ENCODE measurements at regions of chr21 and their contacts with region 1.

Region 1: GRCh38 chr21:42062236-42063022 is 8.7 kb upstream of the UMODL1 start:
- DNase-seq: peak; percentile 83 to 97 (median 90)
- ATAC-seq: peak; percentile 84
- H3K4me3 ChIP-seq: peak overlapping the region; percentile 79
- H3K4me3 Mint-ChIP-seq: peak overlapping the region; percentile 81
- H3K27ac ChIP-seq: peak overlapping the region; percentile 89 to 93
- H3K27ac Mint-ChIP-seq: peak overlapping the region; percentile 98
- H3K4me1 ChIP-seq: peaks cover 56% of the 10 kb centered on the region
- H3K4me1 Mint-ChIP-seq: peaks cover 63% of the 10 kb centered on the region
- H3K27me3 ChIP-seq: no peaks in the 10 kb centered on the region
- H3K27me3 Mint-ChIP-seq: no peaks in the 10 kb centered on the region
- CTCF ChIP-seq: no peak

Region 2: DNA sequence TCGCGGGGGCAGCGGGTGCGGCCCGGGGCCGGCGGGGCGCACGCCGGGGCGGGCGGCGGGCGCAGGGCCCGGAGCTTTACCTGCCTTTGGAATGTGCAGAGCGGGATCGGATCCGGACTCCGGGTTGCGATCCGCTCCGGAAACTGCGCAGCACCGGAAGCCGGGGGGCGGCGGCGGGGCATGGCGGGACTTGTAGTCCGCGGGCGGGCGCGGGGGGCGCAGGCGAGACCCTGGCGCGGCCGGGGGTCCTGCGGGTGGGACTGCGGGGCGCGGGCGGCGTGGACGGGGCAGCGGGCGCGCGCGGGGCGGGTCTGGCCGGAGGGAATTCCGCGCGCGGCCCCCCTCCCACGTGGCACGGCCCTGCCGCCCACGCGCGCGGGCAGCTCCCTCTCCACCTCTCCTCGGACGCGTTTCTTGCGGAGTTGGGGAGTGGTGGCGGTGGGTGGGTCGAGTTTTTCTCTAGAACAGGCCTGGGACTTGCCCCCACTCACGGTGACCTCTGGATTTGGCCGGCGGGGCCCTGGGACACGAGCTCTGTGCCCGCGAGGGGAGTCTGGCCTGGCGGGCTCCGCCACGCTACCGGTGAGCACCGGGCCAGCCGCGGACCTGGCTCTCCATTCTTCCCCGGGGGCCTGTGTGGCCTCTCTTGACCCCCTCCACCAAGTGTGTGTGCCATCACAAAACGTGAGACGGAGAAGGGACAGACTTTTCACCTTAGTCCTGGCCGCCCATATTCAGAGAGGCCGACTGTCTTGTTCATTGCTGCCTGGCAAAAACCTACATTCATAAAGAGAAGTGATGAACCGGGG is 183.0 kb before region 1 on chr21 and contains the start of gene PRDM15:
- CTCF ChIA-PET with region 1: no interaction called
- POLR2A ChIA-PET with region 1: interaction called, 14 read pairs
- intact Hi-C with region 1: loop called (anchors 2 kb)
- DNase-seq: peak; percentile 62 to 86 (median 76)
- ATAC-seq: peak; percentile 71
- H3K4me3 ChIP-seq: peak within 1 kb of the TSS; percentile 73
- H3K4me3 Mint-ChIP-seq: peak within 1 kb of the TSS; percentile 97
- H3K27ac ChIP-seq: peak within 1 kb of the TSS; percentile 47 to 70
- H3K27ac Mint-ChIP-seq: peak within 1 kb of the TSS; percentile 93
- H3K4me1 ChIP-seq: peaks cover 32% of the 10 kb centered on the region
- H3K4me1 Mint-ChIP-seq: peaks cover 37% of the 10 kb centered on the region
- H3K27me3 ChIP-seq: no peaks in the 10 kb centered on the region
- H3K27me3 Mint-ChIP-seq: no peaks in the 10 kb centered on the region
- CTCF ChIP-seq: no peak
- total RNA-seq, gene PRDM15: 10.4 to 12.0 TPM

Region 3: DNA sequence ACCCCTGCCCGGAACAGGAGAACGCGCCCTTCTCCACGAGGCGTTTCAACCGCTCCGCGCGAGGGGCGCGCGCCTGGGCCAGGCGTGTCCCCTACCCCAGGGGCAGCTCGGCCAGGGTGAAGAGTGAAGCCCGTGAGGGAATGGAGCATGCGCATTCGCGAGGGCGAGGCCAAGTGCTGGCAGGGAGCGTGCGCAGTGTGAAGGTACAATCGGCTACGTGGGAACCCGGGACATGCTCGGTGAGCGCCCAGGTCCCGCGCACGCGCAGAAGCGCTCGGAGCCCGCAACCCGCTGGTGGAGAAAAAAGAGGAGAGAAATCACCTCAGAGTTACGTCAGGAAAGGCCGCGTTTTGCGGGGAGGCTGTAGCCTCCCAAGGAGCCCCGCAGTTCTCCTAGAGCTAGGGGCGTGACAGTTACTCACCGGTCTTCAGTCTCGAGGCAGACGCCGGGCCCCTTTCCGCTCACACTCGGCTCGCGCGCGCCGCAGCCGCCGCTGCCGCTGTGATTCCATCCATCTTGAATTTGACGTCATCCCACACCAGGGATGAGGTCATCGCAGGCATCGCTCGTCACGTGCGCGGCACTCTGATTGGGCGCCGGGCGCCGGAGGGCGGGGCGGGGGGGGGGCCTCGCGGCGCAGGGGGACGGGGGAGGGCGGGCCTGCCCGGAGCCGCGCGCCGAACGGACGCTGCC is 52.5 kb before region 1 on chr21 and contains the start of gene ZBTB21:
- CTCF ChIA-PET with region 1: interaction called, 3 read pairs
- POLR2A ChIA-PET with region 1: interaction called, 88 read pairs
- intact Hi-C with region 1: loop called (anchors 1 kb)
- DNase-seq: peak; percentile 96 to 99 (median 98)
- ATAC-seq: peak; percentile 73
- H3K4me3 ChIP-seq: peak within 1 kb of the TSS; percentile 83
- H3K4me3 Mint-ChIP-seq: peak within 1 kb of the TSS; percentile 100
- H3K27ac ChIP-seq: peak within 1 kb of the TSS; percentile 91 to 100
- H3K27ac Mint-ChIP-seq: peak within 1 kb of the TSS; percentile 99
- H3K4me1 ChIP-seq: peaks cover 11% of the 10 kb centered on the region
- H3K4me1 Mint-ChIP-seq: peaks cover 34% of the 10 kb centered on the region
- H3K27me3 ChIP-seq: no peaks in the 10 kb centered on the region
- H3K27me3 Mint-ChIP-seq: no peaks in the 10 kb centered on the region
- CTCF ChIP-seq: no peak
- total RNA-seq, gene ZBTB21: 132 to 139 TPM

Region 4: DNA sequence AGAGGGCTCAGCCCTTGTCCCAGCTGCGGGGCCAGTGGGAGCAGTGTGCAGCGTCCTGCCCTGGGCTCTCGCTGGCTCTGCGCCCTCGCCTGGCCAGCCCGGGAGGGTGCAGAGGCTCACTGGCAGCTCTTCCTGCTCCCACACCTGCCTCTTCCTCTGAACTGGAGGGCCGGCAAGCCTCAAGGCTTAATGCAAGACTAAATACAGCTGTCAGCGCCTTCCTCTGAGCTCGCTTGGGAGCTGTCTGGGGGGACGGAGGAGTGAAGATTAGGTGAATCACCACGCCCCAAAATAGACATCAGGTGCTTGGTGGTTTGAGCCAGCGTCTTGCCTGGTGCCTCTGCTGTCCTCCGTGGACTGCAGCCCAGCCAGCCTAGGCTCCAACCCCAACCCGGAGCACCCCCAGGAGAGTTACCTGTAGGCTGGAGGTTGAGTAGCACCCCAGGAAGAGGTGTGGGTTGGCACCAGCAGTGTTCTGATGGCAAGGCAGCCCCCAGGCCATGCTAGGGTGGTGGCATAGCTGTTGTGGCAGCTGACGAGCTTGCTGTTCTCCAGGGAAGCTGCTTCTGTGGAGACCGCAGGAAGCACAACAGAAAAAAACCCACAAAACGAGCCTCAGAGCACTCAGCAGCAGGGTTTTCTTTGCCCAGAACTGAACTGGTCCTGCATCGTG is 45.6 kb after region 1 on chr21:
- CTCF ChIA-PET with region 1: interaction called, 8 read pairs
- POLR2A ChIA-PET with region 1: interaction called, 49 read pairs
- intact Hi-C with region 1: loop called (anchors 1 to 2 kb)
- DNase-seq: peak; percentile 42 to 85 (median 68)
- ATAC-seq: peak; percentile 95
- H3K4me3 ChIP-seq: peak overlapping the region; percentile 46
- H3K4me3 Mint-ChIP-seq: peak overlapping the region; percentile 75
- H3K27ac ChIP-seq: no peak overlapping the region
- H3K27ac Mint-ChIP-seq: peak overlapping the region; percentile 69
- H3K4me1 ChIP-seq: peaks cover 18% of the 10 kb centered on the region
- H3K4me1 Mint-ChIP-seq: peaks cover 6% of the 10 kb centered on the region
- H3K27me3 ChIP-seq: peaks cover 0 to 2% of the 10 kb centered on the region in 2 experiments
- H3K27me3 Mint-ChIP-seq: no peaks in the 10 kb centered on the region
- CTCF ChIP-seq: peak; percentile 88

Measured in CD4-positive, alpha-beta T cell (primary cell).